ENCODE measurements at regions of chrX and their contacts with region 1.

Region 1: GRCh38 chrX:283115-283845 is 2.1 kb downstream of the PLCXD1 start:
- DNase-seq: peak; percentile 95
- H3K4me3 Mint-ChIP-seq: peak overlapping the region; percentile 86
- H3K27ac Mint-ChIP-seq: peak overlapping the region; percentile 87
- H3K4me1 Mint-ChIP-seq: peaks cover 22% of the 10 kb centered on the region
- H3K27me3 Mint-ChIP-seq: no peaks in the 10 kb centered on the region

Region 2: DNA sequence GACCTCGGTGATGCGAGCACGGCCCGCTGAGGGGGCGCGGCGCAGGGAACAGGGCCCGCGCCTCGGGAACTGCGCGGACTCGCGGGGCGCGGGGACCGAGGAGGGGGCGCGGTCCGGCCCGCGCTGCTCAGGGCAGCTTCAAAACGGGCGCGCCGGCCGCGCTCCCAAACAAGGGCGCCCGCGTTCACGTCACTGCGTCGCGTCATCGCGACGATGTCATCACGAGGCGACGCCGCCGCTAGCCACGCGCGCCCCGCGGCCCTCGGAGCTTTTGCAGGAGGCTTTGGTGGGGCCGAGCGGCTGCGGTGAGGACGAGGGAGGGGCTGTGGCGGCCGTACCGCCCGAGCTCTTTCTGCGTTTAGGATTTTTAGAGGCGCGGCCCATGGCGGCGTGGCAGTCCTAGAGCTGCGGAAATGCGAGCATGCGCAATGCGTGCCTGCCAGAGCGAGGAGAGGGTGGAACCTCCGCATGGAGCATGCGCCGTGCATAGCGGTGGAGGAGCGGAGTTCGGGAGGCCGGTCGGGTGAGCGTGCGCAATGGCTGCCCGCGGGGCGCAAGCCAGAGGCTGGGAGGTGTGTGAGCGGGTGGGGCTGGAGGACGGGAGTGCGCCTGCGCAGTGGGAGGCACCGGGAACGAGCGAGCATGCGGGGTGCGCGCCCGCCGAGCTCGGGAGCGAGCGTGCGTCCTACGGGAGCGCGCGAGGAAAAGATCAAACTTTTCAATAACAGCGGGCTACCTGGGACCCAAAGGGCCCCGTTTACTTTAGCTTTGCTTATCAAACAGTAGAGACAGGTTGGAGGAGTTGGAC is 103.7 kb after region 1 on chrX and contains the start of gene PPP2R3B:
- CTCF ChIA-PET with region 1: no interaction called
- POLR2A ChIA-PET with region 1: no interaction called
- intact Hi-C with region 1: loop called (anchors 5 kb)
- DNase-seq: peak; percentile 99
- H3K4me3 Mint-ChIP-seq: peak within 1 kb of the TSS; percentile 90
- H3K27ac Mint-ChIP-seq: peak within 1 kb of the TSS; percentile 99
- H3K4me1 Mint-ChIP-seq: peaks cover 7% of the 10 kb centered on the region
- H3K27me3 Mint-ChIP-seq: peaks cover 3% of the 10 kb centered on the region
- total RNA-seq, gene PPP2R3B: 31.7 to 32.2 TPM

Region 3: DNA sequence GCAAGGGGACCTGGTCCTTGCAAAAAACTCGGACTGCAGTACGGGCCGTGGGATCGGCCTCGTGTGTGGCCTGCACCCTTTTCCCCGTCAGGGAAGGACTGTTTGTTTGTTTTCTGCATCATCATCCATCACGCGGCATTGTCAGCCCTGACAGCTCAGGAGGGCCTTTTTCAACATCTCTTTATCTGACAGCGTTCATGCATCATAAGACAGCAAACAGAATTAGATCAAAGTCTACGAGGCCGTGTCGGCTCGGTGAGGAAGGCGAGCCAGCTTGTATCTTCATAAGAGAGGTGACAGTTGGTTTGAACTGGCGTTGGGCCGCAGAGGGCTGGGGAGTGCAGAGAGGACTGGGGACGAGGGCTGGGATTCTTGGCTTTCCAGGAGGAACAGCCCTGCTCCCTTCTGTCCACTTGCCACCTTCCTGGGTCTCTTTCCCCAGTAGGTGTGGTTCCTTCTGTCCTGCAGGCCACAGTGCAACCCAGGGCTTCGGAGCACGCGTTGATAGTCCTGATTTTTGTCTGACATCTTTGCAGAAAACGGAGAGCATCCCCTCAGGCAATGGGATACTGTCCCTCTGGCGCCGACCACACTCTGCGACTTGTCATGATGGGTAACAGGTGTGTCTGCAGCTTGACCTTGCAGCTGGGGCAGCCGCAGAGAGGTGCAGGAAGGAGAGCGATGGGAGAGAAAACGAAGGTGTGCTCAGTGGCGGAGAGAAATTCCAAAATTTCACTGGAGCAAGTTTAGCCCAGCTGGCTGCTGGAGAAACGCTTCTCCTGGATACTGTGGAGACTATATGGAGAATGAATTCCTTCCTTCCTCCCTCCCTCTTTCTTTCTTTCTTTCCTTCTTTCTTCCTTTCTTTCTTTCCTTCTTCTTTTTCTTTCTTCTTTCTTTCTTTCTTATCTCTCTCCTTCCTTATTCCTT is 243.3 kb after region 1 on chrX:
- CTCF ChIA-PET with region 1: no interaction called
- POLR2A ChIA-PET with region 1: no interaction called
- intact Hi-C with region 1: no loop called
- DNase-seq: peak; percentile 9
- H3K4me3 Mint-ChIP-seq: no peak overlapping the region
- H3K27ac Mint-ChIP-seq: no peak overlapping the region
- H3K4me1 Mint-ChIP-seq: no peaks in the 10 kb centered on the region
- H3K27me3 Mint-ChIP-seq: no peaks in the 10 kb centered on the region

Measured in activated CD4-positive, alpha-beta memory T cell treated with anti-CD3 and anti-CD28 coated beads for 36 hours (primary cell).